ENCODE measurements at regions of chr11 and their contacts with region 1.

Region 1: GRCh38 chr11:89613911-89614310 is 96.2 kb upstream of the TRIM77 start:
- DNase-seq: peak; percentile 18
- H3K4me3 ChIP-seq: no peak overlapping the region
- H3K27ac ChIP-seq: no peak overlapping the region
- H3K4me1 ChIP-seq: no peaks in the 10 kb centered on the region
- H3K27me3 ChIP-seq: no peaks in the 10 kb centered on the region

Region 2: GRCh38 chr11:89327885-89328284 is 286.0 kb before region 1 on chr11:
- in situ Hi-C with region 1: loop called (anchors 25 kb)
- DNase-seq: no peak
- H3K4me3 ChIP-seq: no peak overlapping the region
- H3K27ac ChIP-seq: no peak overlapping the region
- H3K4me1 ChIP-seq: no peaks in the 10 kb centered on the region
- H3K27me3 ChIP-seq: no peaks in the 10 kb centered on the region

Region 3: DNA sequence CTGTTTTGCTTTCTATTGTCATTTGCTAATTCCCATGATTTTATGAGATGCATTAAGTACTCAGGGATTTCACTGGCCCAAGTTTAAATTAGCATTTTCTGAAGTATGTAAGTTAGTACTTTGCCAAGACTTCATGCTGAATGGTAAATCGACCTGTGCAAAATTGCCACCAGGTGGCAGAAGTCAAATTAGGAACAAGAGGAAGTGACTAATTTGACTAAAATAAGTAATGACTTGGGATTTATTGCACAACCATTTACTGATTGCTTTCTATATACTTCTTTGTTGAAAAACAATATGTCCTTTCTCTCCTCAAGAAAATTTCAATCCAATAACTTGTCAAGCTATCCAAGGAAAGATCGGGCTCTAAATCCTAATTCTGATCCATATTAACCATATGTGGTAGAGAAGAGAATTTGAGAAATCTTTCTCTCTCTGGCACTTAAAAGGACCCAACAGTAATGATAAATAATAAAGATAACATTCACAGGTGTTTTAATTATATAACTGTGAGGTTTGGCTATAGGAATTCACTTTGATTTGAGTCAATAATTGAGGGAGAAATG is 862.6 kb after region 1 on chr11:
- in situ Hi-C with region 1: no loop called
- DNase-seq: peak; percentile 26
- H3K4me3 ChIP-seq: no peak overlapping the region
- H3K27ac ChIP-seq: no peak overlapping the region
- H3K4me1 ChIP-seq: no peaks in the 10 kb centered on the region
- H3K27me3 ChIP-seq: no peaks in the 10 kb centered on the region